ENCODE measurements at regions of chr12 and their contacts with region 1.

Region 1: GRCh38 chr12:48988030-48988649 is 10.0 kb downstream of the WNT1 start:
- DNase-seq: peak; percentile 91
- ATAC-seq: peak; percentile 89
- H3K4me3 Mint-ChIP-seq: no peak overlapping the region
- H3K27ac Mint-ChIP-seq: no peak overlapping the region
- H3K4me1 Mint-ChIP-seq: peaks cover 10% of the 10 kb centered on the region
- H3K27me3 Mint-ChIP-seq: peaks cover 76% of the 10 kb centered on the region
- CTCF ChIP-seq: peak; percentile 96

Region 2: GRCh38 chr12:48824112-48824511 is 164.0 kb before region 1 on chr12:
- CTCF ChIA-PET with region 1: interaction called, 10 read pairs
- POLR2A ChIA-PET with region 1: no interaction called
- DNase-seq: peak; percentile 74
- ATAC-seq: peak; percentile 92
- H3K4me3 Mint-ChIP-seq: peak overlapping the region; percentile 16; the same call in 1 of the 2 replicates
- H3K27ac Mint-ChIP-seq: peak overlapping the region; percentile 58
- H3K4me1 Mint-ChIP-seq: peaks cover 29% of the 10 kb centered on the region
- H3K27me3 Mint-ChIP-seq: peaks cover 23% of the 10 kb centered on the region
- CTCF ChIP-seq: no peak

Region 3: GRCh38 chr12:48882315-48882687 is 105.8 kb before region 1 on chr12:
- CTCF ChIA-PET with region 1: interaction called, 21 read pairs
- POLR2A ChIA-PET with region 1: no interaction called
- DNase-seq: peak; percentile 26
- ATAC-seq: peak; percentile 50
- H3K4me3 Mint-ChIP-seq: peak overlapping the region; percentile 50
- H3K27ac Mint-ChIP-seq: peak overlapping the region; percentile 56
- H3K4me1 Mint-ChIP-seq: peaks cover 33% of the 10 kb centered on the region
- H3K27me3 Mint-ChIP-seq: peaks cover 7% of the 10 kb centered on the region
- CTCF ChIP-seq: no peak

Region 4: GRCh38 chr12:48924617-48925303 is 63.4 kb before region 1 on chr12:
- CTCF ChIA-PET with region 1: interaction called, 16 read pairs
- POLR2A ChIA-PET with region 1: no interaction called
- DNase-seq: peak; percentile 69
- ATAC-seq: peak; percentile 69
- H3K4me3 Mint-ChIP-seq: peak overlapping the region; percentile 82
- H3K27ac Mint-ChIP-seq: peak overlapping the region; percentile 80
- H3K4me1 Mint-ChIP-seq: peaks cover 15% of the 10 kb centered on the region
- H3K27me3 Mint-ChIP-seq: no peaks in the 10 kb centered on the region; the same call in 1 of the 2 replicates
- CTCF ChIP-seq: 0 out of 2 replicates have a peak, but pooled peaks have one; percentile 15

Region 5: GRCh38 chr12:48969833-48970701 is 18.1 kb before region 1 on chr12:
- CTCF ChIA-PET with region 1: interaction called, 164 read pairs
- POLR2A ChIA-PET with region 1: no interaction called
- DNase-seq: peak; percentile 48
- ATAC-seq: peak; percentile 3; the same call in 1 of the 2 replicates
- H3K4me3 Mint-ChIP-seq: peak overlapping the region; percentile 86
- H3K27ac Mint-ChIP-seq: no peak overlapping the region
- H3K4me1 Mint-ChIP-seq: peaks cover 54% of the 10 kb centered on the region
- H3K27me3 Mint-ChIP-seq: peaks cover 89% of the 10 kb centered on the region
- CTCF ChIP-seq: no peak

Region 6: DNA sequence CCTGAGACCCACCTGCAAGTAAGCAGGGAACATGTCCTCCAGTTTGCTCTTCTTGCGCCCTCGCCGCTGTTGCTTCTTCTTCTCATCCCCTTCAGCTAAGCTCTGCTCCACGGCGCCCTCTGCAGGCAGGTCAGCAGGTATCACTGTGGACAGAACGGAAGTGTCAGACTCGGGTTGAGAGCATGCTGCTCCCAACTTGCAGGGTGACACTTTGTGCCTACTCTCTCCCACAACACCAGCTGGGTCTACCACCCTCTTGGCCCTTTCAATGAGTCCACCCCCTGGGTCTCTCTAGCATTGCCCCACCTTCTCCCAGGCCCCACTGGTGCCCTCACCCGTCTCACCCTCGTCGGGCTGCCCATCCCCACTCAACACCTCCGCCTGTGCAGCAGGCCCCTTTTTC is 55.7 kb after region 1 on chr12:
- CTCF ChIA-PET with region 1: interaction called, 13 read pairs
- POLR2A ChIA-PET with region 1: no interaction called
- DNase-seq: peak; percentile 91
- ATAC-seq: peak; percentile 86
- H3K4me3 Mint-ChIP-seq: no peak overlapping the region
- H3K27ac Mint-ChIP-seq: no peak overlapping the region
- H3K4me1 Mint-ChIP-seq: no peaks in the 10 kb centered on the region
- H3K27me3 Mint-ChIP-seq: no peaks in the 10 kb centered on the region
- CTCF ChIP-seq: peak; percentile 76

Region 7: DNA sequence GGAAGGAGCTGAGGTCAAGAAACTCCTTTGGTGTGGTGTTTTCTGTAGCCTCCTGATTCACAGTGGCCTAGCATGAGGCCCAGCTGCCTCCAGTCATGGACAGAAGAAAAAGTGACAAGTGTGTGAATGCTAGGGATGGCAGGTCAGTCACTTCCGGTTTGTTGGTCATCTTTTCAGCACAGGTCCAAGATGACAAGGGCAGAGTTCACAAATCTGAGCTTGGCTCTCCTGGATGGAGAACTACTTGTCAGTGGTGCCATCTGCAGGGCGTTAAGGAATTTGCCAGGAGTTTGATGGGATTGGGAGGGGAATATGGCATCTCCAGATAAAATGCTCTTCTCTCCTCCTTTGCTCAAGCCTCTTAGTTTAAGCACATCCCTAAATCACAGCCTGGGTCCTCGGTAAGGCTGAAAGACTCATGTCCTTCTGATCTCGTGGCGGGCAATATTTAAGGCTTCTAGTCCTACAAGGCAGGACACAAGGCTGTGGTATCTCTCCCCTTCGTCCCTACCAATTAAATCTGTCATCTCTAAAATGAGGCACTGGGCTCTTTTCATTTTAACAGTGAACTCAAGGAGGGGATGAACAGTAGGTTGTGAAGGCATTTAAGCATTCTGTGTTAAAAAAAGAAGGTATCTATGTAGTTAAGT is 133.0 kb after region 1 on chr12:
- CTCF ChIA-PET with region 1: interaction called, 11 read pairs
- POLR2A ChIA-PET with region 1: no interaction called
- DNase-seq: peak; percentile 45
- ATAC-seq: peak; percentile 93
- H3K4me3 Mint-ChIP-seq: no peak overlapping the region
- H3K27ac Mint-ChIP-seq: no peak overlapping the region
- H3K4me1 Mint-ChIP-seq: no peaks in the 10 kb centered on the region
- H3K27me3 Mint-ChIP-seq: peaks cover 9% of the 10 kb centered on the region
- CTCF ChIP-seq: no peak